ENCODE measurements at regions of chr3 and their contacts with region 1.

Region 1: DNA sequence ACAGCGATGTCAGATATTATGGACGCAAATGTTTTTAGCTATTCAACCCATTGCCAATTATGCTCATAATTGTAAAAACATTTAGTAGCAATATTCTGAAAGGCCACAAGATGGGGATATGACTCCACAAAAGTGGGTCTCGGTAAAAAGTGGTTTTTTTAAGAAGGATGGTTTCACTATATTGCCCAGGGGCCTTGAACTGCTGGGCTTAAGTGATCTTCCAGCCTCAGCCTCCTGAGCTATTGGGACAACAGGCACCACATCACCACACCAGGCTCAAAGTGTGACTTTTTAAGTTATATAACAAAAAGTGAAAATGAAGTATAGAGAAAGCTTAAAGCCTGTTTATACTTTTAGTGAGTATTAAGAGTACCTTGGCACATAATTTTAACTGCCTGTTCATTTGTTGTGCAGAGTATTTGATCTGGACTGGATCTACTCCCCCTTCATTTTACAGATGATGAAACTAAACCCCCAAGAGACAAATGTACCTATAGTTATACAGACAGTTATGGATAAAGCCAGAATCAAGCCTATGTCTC is 9.4 kb downstream of the NAA50 start:
- DNase-seq: peak; percentile 31
- H3K4me3 Mint-ChIP-seq: no peak overlapping the region
- H3K27ac Mint-ChIP-seq: peak overlapping the region; percentile 37
- H3K4me1 Mint-ChIP-seq: peaks cover 40% of the 10 kb centered on the region
- H3K27me3 Mint-ChIP-seq: no peaks in the 10 kb centered on the region

Region 2: DNA sequence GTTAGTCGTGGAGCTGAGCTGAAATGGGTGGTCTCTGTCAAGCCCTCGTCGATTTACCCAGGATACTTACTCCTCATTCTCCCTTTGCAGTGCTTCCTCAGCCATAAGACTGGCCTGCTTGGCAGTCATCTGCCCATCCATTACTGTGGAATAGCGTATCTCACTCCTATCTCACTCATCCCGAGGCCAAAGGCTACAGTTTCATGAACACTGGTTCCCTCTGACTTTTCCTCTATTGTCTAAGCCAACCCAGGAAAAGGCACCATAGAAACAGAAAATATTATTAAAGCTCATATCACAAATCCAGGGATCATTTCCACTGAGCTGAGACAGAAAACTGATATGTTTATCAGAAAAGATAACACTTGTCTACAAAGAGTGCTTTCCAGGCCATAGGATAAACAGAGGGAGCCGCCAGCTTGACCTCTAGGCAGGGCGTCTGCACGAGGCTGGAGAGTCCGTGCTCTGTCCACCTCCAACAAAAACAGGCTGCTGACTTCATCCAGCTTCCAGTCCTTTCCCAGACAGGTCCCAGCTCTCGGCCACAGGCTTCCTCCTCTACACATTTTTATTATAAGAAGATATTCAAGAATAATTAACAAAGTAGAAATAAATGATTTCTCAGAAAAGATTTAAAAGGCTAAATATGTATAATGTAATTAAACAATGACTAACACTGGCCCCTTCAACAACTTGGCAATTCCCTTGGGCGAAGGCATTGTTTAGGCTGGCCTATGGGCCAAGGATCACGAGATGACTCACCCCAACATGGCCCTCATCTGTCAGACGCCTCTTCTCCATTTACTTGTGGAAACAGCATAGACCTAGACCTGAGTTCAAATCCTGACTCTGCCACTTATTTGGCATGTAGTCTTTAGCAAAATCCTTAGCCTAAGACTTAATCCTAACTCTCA is 552.6 kb before region 1 on chr3:
- CTCF ChIA-PET with region 1: no interaction called
- POLR2A ChIA-PET with region 1: no interaction called
- DNase-seq: no peak
- H3K4me3 Mint-ChIP-seq: no peak overlapping the region
- H3K27ac Mint-ChIP-seq: no peak overlapping the region
- H3K4me1 Mint-ChIP-seq: no peaks in the 10 kb centered on the region
- H3K27me3 Mint-ChIP-seq: peaks cover 3% of the 10 kb centered on the region

Region 3: DNA sequence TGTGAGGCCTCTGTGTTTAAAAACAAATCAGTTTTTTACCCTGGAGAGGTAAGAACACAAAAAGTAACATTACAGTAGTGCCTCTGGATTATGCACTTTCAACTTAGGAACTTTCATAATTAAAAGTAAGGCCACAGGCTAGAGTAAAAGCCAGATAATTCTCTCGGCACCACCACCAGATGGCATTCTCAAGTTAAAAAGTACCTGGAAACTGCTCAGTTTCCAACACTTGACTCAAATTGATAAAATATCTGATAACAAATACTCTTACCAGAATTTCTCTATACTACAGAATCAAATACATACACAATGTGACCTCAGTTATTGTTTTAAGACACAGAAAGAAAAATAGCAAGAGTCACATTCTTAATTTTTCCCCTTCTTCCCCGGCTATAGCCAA is 241.6 kb before region 1 on chr3:
- CTCF ChIA-PET with region 1: interaction called, 11 read pairs
- POLR2A ChIA-PET with region 1: no interaction called
- DNase-seq: peak; percentile 47
- H3K4me3 Mint-ChIP-seq: no peak overlapping the region
- H3K27ac Mint-ChIP-seq: no peak overlapping the region
- H3K4me1 Mint-ChIP-seq: peaks cover 8% of the 10 kb centered on the region
- H3K27me3 Mint-ChIP-seq: no peaks in the 10 kb centered on the region

Region 4: GRCh38 chr3:113643581-113643980 is 93.0 kb before region 1 on chr3:
- CTCF ChIA-PET with region 1: no interaction called
- POLR2A ChIA-PET with region 1: no interaction called
- DNase-seq: no peak
- H3K4me3 Mint-ChIP-seq: no peak overlapping the region
- H3K27ac Mint-ChIP-seq: no peak overlapping the region
- H3K4me1 Mint-ChIP-seq: no peaks in the 10 kb centered on the region
- H3K27me3 Mint-ChIP-seq: no peaks in the 10 kb centered on the region

Region 5: DNA sequence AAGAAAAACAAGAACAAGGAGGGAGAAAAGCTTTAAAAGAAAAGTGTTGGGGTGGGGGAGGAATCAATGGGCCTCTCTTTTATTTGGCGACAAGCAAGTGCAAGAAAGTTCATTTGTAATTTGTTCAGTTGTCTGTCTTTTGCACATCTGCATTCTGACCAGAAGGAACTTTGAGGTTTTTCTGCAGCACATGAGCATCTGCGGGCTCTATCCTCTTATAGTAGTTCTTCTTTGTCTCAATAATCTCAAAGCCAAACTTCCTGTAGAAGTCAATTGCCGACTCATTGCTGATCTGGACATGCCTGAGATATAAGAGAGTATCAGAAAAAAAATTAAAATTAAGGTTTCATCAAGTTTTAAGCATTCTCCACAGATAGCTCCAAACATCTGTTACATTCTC is 15.0 kb before region 1 on chr3:
- CTCF ChIA-PET with region 1: interaction called, 11 read pairs
- POLR2A ChIA-PET with region 1: no interaction called
- DNase-seq: no peak
- H3K4me3 Mint-ChIP-seq: no peak overlapping the region
- H3K27ac Mint-ChIP-seq: no peak overlapping the region
- H3K4me1 Mint-ChIP-seq: peaks cover 4% of the 10 kb centered on the region
- H3K27me3 Mint-ChIP-seq: no peaks in the 10 kb centered on the region

Region 6: DNA sequence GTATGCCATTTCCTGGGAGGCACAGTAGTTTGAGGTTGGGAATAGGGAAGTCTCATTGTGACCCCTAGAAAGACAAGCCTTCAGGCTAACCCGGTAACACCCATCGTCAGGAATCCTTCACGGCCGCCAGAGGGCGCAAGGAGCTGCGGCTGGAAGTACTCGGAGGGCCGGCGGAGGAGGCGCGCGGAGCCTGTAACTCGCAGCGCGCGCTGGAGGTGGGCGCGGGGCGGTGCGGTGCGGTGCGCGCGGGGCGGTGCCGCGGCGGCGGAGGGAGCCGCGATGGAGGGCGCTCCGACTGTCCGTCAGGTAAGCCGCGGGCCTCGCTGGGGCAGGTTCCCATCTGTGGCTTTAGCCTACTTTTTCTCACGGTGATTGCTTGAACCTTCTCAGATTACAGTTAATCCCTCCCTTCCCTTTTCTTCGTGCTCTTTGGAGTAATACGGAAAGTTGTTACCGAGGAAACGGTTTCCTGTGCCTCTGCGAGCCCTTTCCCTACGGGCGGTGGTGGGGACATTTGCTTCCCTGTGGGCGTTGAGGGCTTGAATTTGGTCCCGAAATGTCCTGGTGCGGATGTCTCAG is 102.1 kb after region 1 on chr3 and contains the start of gene GRAMD1C:
- CTCF ChIA-PET with region 1: interaction called, 12 read pairs
- POLR2A ChIA-PET with region 1: no interaction called
- DNase-seq: peak; percentile 86
- H3K4me3 Mint-ChIP-seq: peak within 1 kb of the TSS; percentile 72
- H3K27ac Mint-ChIP-seq: no peak within 1 kb of the TSS
- H3K4me1 Mint-ChIP-seq: peaks cover 6% of the 10 kb centered on the region
- H3K27me3 Mint-ChIP-seq: peaks cover 4% of the 10 kb centered on the region
- total RNA-seq, gene GRAMD1C: 0.48 to 0.91 TPM

Region 7: DNA sequence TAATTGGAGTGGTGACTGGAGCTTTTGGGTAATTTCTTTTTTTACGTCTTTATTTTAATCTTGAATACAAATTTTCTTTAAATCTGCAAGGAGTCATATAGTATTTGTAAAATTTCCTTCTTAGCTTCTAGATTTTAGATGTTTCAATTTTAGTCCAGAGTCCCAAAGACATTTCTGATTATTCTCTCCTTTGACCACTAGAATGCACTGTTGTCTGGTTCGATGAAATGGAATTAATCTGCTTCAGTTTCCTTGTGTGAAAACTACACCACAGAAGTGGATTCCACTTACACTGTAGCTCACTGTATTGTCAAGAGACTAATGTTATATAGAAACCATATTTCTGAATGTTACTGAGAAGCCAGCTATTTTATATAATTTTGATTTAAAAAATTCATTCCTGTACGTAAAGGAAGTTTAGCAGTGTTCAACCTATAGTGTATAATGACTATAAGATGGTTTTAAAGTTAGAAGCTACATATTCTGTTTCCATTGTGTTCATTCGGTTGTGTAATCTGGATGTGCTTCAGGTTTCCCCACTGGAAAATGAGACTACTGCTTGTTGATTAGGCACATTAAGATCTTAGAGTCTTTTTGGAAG is 108.1 kb after region 1 on chr3:
- CTCF ChIA-PET with region 1: interaction called, 12 read pairs
- POLR2A ChIA-PET with region 1: no interaction called
- DNase-seq: no peak
- H3K4me3 Mint-ChIP-seq: no peak overlapping the region
- H3K27ac Mint-ChIP-seq: no peak overlapping the region
- H3K4me1 Mint-ChIP-seq: no peaks in the 10 kb centered on the region
- H3K27me3 Mint-ChIP-seq: no peaks in the 10 kb centered on the region

Region 8: DNA sequence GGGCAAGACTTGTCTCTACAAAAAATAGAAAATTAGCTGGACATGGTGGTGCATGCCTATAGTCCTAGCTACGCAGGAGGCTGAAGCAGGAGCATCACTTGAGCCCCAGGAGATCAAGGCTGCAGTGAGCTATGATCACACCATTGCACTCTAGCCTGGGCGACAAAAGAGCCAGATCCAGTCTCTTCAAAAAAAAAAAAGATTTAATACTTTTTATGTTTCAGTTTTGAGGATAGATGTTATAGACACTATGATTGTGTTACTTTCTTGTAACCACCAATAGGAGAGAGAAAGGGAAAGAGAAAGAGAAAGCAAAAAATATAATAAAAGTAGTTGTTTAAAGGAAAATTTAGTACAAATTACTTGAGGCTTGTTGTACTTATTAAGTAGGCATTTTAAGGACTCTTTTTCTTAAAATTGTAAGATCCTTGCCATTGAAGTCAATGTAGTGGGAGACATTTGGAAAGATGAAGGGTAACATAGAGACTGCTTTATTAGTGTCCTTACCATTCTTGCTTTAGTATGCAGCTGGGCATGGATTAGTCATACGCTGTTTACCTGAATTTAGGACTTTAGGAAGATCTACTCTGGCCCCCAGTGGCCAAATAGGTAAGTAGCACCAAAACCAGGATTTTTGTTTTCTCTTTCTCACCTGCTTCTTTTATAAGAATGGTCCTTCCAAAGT is 176.1 kb after region 1 on chr3:
- CTCF ChIA-PET with region 1: interaction called, 17 read pairs
- POLR2A ChIA-PET with region 1: no interaction called
- DNase-seq: peak; percentile 26
- H3K4me3 Mint-ChIP-seq: peak overlapping the region; percentile 63
- H3K27ac Mint-ChIP-seq: peak overlapping the region; percentile 35
- H3K4me1 Mint-ChIP-seq: peaks cover 8% of the 10 kb centered on the region
- H3K27me3 Mint-ChIP-seq: no peaks in the 10 kb centered on the region

Region 9: DNA sequence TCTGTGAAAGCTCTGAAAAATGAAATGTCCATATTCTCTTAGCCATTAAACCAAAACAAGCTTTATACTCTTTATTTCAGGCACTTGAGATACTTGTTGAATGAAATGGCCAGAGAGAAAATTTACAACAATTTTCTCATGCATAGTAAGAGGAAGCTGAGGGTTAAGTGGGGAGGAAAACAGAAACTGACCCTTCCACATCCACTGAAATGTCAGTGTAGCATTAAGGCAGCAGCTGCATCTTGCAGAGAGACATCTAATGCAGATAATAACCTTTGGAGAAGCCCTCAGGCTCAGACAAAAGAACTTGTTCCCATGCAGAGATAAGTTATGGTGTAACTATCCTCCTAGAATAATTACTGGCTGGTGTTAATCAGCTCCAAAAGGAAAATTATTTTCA is 245.2 kb after region 1 on chr3:
- CTCF ChIA-PET with region 1: no interaction called
- POLR2A ChIA-PET with region 1: no interaction called
- DNase-seq: no peak
- H3K4me3 Mint-ChIP-seq: no peak overlapping the region
- H3K27ac Mint-ChIP-seq: no peak overlapping the region
- H3K4me1 Mint-ChIP-seq: no peaks in the 10 kb centered on the region
- H3K27me3 Mint-ChIP-seq: no peaks in the 10 kb centered on the region

Region 10: GRCh38 chr3:114133947-114134346 is 397.3 kb after region 1 on chr3:
- CTCF ChIA-PET with region 1: no interaction called
- POLR2A ChIA-PET with region 1: no interaction called
- DNase-seq: no peak
- H3K4me3 Mint-ChIP-seq: no peak overlapping the region
- H3K27ac Mint-ChIP-seq: peak overlapping the region; percentile 33
- H3K4me1 Mint-ChIP-seq: peaks cover 8% of the 10 kb centered on the region
- H3K27me3 Mint-ChIP-seq: no peaks in the 10 kb centered on the region